ENCODE measurements at regions of chr2 and their contacts with region 1.

Region 1: GRCh38 chr2:203706403-203706802 is at the start of gene CD28:
- DNase-seq: peak; percentile 78 to 97 (median 86)
- ATAC-seq: peak; percentile 76
- H3K4me3 ChIP-seq: peak within 1 kb of the TSS; percentile 81
- H3K4me3 Mint-ChIP-seq: peak within 1 kb of the TSS; percentile 90
- H3K27ac ChIP-seq: peak within 1 kb of the TSS; percentile 82 to 92
- H3K27ac Mint-ChIP-seq: peak within 1 kb of the TSS; percentile 92
- H3K4me1 ChIP-seq: peaks cover 22% of the 10 kb centered on the region
- H3K4me1 Mint-ChIP-seq: peaks cover 54% of the 10 kb centered on the region
- H3K27me3 ChIP-seq: no peaks in the 10 kb centered on the region
- H3K27me3 Mint-ChIP-seq: no peaks in the 10 kb centered on the region
- CTCF ChIP-seq: no peak
- total RNA-seq, gene CD28: 128 to 130 TPM

Region 2: GRCh38 chr2:203535078-203535783 is 171.2 kb before region 1 on chr2 and contains the start of gene RAPH1:
- CTCF ChIA-PET with region 1: no interaction called
- POLR2A ChIA-PET with region 1: interaction called, 9 read pairs
- intact Hi-C with region 1: loop called (anchors 2 to 5 kb)
- DNase-seq: peak; percentile 13 to 77 (median 49)
- ATAC-seq: peak; percentile 61
- H3K4me3 ChIP-seq: peak within 1 kb of the TSS; percentile 72
- H3K4me3 Mint-ChIP-seq: peak within 1 kb of the TSS; percentile 97
- H3K27ac ChIP-seq: no peak within 1 kb of the TSS
- H3K27ac Mint-ChIP-seq: peak within 1 kb of the TSS; percentile 80
- H3K4me1 ChIP-seq: peaks cover 20% of the 10 kb centered on the region
- H3K4me1 Mint-ChIP-seq: peaks cover 36% of the 10 kb centered on the region
- H3K27me3 ChIP-seq: peaks cover 0 to 4% of the 10 kb centered on the region in 2 experiments
- H3K27me3 Mint-ChIP-seq: peaks cover 5% of the 10 kb centered on the region
- CTCF ChIP-seq: no peak
- total RNA-seq, gene RAPH1: 4.3 to 5.8 TPM

Region 3: GRCh38 chr2:203730076-203730729 is 23.8 kb after region 1 on chr2:
- CTCF ChIA-PET with region 1: no interaction called
- POLR2A ChIA-PET with region 1: interaction called, 621 read pairs
- intact Hi-C with region 1: no loop called
- DNase-seq: no peak
- ATAC-seq: peak; percentile 62
- H3K4me3 ChIP-seq: no peak overlapping the region
- H3K4me3 Mint-ChIP-seq: peak overlapping the region; percentile 75
- H3K27ac ChIP-seq: peak overlapping the region; percentile 25 to 26
- H3K27ac Mint-ChIP-seq: peak overlapping the region; percentile 87
- H3K4me1 ChIP-seq: peaks cover 61% of the 10 kb centered on the region
- H3K4me1 Mint-ChIP-seq: peaks cover 95% of the 10 kb centered on the region
- H3K27me3 ChIP-seq: no peaks in the 10 kb centered on the region
- H3K27me3 Mint-ChIP-seq: no peaks in the 10 kb centered on the region
- CTCF ChIP-seq: no peak

Region 4: DNA sequence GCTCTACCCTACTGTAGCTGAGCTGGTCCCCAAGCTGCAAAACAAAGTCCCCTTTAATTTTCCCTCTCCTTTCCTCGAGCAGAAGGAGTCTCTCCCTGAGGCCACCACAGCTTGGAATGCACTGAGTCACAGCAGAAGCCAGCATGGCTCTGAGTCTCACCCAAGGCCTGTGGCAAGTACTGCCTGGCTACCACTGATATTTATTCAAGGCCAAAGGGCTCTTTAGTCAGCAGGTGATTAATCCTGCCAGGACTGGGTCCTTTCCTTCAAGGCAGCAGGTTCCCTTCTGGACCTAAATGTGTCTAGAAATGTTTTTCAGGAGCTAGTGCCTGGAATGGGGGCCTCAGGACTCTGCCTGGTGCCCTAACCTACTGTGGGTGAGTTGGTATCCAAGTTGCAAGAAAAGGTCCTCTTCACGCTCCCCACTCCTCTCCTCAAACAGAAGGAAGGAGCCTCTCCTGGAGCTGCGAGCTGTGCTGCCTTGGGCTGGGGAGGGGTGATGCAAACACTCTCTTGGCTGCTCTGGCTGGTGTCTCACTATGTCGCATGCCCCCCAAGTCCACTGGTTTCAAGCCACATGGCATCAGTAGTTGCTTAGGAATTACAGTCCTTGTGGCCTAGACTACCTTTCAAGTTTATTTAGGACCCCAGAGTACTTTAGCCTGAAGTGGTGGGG is 53.4 kb after region 1 on chr2:
- CTCF ChIA-PET with region 1: no interaction called
- POLR2A ChIA-PET with region 1: interaction called, 3 read pairs
- intact Hi-C with region 1: loop called in 1 of 2 experiments (anchors 5 kb)
- DNase-seq: no peak
- ATAC-seq: no peak
- H3K4me3 ChIP-seq: no peak overlapping the region
- H3K4me3 Mint-ChIP-seq: no peak overlapping the region
- H3K27ac ChIP-seq: no peak overlapping the region
- H3K27ac Mint-ChIP-seq: peak overlapping the region; percentile 64
- H3K4me1 ChIP-seq: peaks cover 33% of the 10 kb centered on the region
- H3K4me1 Mint-ChIP-seq: peaks cover 81% of the 10 kb centered on the region
- H3K27me3 ChIP-seq: no peaks in the 10 kb centered on the region
- H3K27me3 Mint-ChIP-seq: no peaks in the 10 kb centered on the region
- CTCF ChIP-seq: no peak

Region 5: DNA sequence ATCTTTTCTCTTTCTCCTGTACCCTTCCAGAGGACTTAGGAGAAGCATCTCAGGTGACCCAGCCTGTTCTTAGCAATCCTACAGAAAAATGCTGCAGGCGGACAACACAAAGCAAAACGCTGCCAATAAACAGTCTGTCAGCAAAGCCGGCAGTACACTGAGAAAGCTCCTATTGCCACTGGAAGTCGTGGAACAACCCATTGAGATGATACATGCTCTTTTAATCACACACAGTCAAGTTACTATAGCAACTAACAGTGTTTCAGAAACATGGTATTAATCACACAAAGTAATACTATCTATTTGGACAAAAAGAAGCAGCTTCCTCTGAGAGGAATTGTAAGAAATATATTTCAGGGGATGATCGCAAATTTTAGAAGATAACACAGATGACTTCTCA is 171.7 kb after region 1 on chr2:
- CTCF ChIA-PET with region 1: no interaction called
- POLR2A ChIA-PET with region 1: no interaction called
- intact Hi-C with region 1: no loop called
- DNase-seq: no peak
- ATAC-seq: no peak
- H3K4me3 ChIP-seq: no peak overlapping the region
- H3K4me3 Mint-ChIP-seq: no peak overlapping the region
- H3K27ac ChIP-seq: no peak overlapping the region
- H3K27ac Mint-ChIP-seq: peak overlapping the region; percentile 21
- H3K4me1 ChIP-seq: peaks cover 38% of the 10 kb centered on the region
- H3K4me1 Mint-ChIP-seq: peaks cover 46% of the 10 kb centered on the region
- H3K27me3 ChIP-seq: no peaks in the 10 kb centered on the region
- H3K27me3 Mint-ChIP-seq: no peaks in the 10 kb centered on the region
- CTCF ChIP-seq: no peak

Region 6: GRCh38 chr2:204024503-204024902 is 318.1 kb after region 1 on chr2:
- CTCF ChIA-PET with region 1: no interaction called
- POLR2A ChIA-PET with region 1: no interaction called
- intact Hi-C with region 1: no loop called
- DNase-seq: peak in 4 of 14 experiments; percentile 21 to 43 (median 36)
- ATAC-seq: no peak
- H3K4me3 ChIP-seq: no peak overlapping the region
- H3K4me3 Mint-ChIP-seq: no peak overlapping the region
- H3K27ac ChIP-seq: no peak overlapping the region
- H3K27ac Mint-ChIP-seq: no peak overlapping the region
- H3K4me1 ChIP-seq: peaks cover 22% of the 10 kb centered on the region
- H3K4me1 Mint-ChIP-seq: peaks cover 36% of the 10 kb centered on the region
- H3K27me3 ChIP-seq: no peaks in the 10 kb centered on the region
- H3K27me3 Mint-ChIP-seq: no peaks in the 10 kb centered on the region
- CTCF ChIP-seq: peak; percentile 30

Measured in CD4-positive, alpha-beta T cell (primary cell).